Ascending aorta (tissue), 2 donors: ENCODE measurements at regions of chr1 and their contacts with region 1.

Region 1: GRCh38 chr1:119613769-119614720 is 34.0 kb downstream of the ZNF697 start:
- DNase-seq: peak in 1 of 2 donors; percentile 91
- H3K4me3 ChIP-seq: no peak overlapping the region
- H3K27ac ChIP-seq: no peak overlapping the region
- H3K4me1 ChIP-seq: peaks cover 0 to 4% of the 10 kb centered on the region in 2 donors
- H3K27me3 ChIP-seq: no peaks in the 10 kb centered on the region
- CTCF ChIP-seq: peak; percentile 80 to 86 (median 84)

Region 2: GRCh38 chr1:119647734-119648619 is 33.9 kb after region 1 on chr1 and contains the start of gene ZNF697:
- intact Hi-C with region 1: loop called (anchors 1 kb)
- DNase-seq: peak; percentile 86 to 98
- H3K4me3 ChIP-seq: peak within 1 kb of the TSS; percentile 90 to 96
- H3K27ac ChIP-seq: peak within 1 kb of the TSS; percentile 87 to 95
- H3K4me1 ChIP-seq: peaks cover 0 to 4% of the 10 kb centered on the region in 2 donors
- H3K27me3 ChIP-seq: no peaks in the 10 kb centered on the region
- CTCF ChIP-seq: peak in 2 of 3 experiments; percentile 7 to 48
- total RNA-seq, gene ZNF697: 0.11 TPM

Region 3: DNA sequence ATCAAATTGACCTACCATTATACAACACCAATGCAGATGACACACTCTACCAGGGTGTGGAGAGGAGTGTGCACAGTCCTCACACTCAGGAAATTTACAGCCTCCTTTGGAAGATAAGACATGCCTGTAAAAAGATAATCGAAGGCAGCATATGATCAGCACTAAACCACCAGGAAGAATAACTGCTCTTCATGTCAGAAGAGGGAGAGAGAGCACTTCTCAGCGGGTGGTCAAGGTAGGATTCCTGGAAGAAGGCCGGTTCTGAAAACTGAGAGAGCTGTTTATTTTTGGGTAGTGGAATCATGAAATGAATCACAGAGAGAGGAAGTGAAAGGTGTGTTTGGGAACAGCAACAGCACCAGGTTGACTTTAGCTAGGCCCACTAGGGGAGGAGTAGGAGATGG is 48.0 kb after region 1 on chr1:
- intact Hi-C with region 1: loop called (anchors 1 kb)
- DNase-seq: no peak
- H3K4me3 ChIP-seq: no peak overlapping the region
- H3K27ac ChIP-seq: no peak overlapping the region
- H3K4me1 ChIP-seq: no peaks in the 10 kb centered on the region
- H3K27me3 ChIP-seq: no peaks in the 10 kb centered on the region
- CTCF ChIP-seq: no peak

Region 4: GRCh38 chr1:119675349-119676345 is 61.6 kb after region 1 on chr1:
- intact Hi-C with region 1: loop called (anchors 1 kb)
- DNase-seq: peak; percentile 21 to 93
- H3K4me3 ChIP-seq: peak overlapping the region; percentile 56 to 58
- H3K27ac ChIP-seq: peak overlapping the region; percentile 9 to 55
- H3K4me1 ChIP-seq: peaks cover 0 to 4% of the 10 kb centered on the region in 2 donors
- H3K27me3 ChIP-seq: no peaks in the 10 kb centered on the region
- CTCF ChIP-seq: peak; percentile 64 to 87 (median 74)